ENCODE measurements at regions of chr11 and their contacts with region 1.

Region 1: DNA sequence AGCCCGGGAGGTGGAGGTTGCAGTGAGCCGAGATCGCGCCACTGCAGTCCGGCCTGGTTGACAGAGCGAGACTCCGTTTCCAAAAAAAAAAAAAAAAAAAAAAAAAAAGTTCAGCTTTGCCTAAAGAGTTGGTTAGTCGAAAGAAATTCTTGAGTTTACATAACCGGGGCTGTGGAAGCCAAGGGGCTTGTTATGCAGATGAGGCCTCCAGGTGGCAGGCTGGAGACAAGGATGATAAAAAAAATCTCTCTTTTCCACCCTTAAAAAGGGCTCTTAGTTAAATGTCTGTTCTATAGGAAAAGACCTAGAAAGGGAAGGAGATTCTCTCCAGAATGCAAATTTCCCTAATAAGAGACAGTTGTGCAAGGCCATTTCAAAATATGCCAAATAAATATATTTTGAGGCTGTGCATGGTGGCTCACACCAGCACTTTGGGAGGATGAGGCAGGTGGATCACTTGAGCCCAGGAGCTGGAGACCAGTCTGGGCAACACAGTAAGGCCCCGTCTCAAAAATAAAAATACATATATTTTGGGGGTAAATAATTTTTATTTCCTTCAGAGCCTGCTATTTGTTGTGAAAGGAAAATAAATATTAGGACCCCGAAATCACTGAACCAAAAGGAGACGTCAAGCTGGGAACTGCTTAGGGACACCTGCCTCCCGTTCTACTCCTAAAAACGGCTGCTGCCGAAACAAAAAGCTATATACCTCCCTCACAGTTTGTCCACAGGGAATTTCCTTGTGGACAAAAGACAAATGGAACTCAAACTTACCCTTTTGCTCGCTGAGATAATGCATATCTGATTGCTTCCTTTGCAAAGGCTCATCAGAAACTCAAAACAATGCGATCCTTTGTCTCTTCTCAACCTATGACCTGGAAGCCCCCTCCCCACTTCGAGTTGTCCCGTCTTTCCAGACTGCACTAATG is 2.4 kb upstream of the IFITM2 start:
- DNase-seq: peak; percentile 90
- H3K4me3 ChIP-seq: no peak overlapping the region
- H3K27ac ChIP-seq: peak overlapping the region in 3 of 4 donors; percentile 14 to 86 (median 19)
- H3K4me1 ChIP-seq: peaks cover 0 to 44% (median 15%) of the 10 kb centered on the region in 4 donors
- H3K27me3 ChIP-seq: peaks cover under 1 to 12% (median 3%) of the 10 kb centered on the region in 3 donors
- CTCF ChIP-seq: peak; percentile 64 to 80 (median 74)
- EP300 ChIP-seq: no peak
- POLR2A ChIP-seq: no peak

Region 2: GRCh38 chr11:207208-207862 is 97.8 kb before region 1 on chr11 and contains the starts of genes BET1L and RIC8A:
- intact Hi-C with region 1: loop called (anchors 5 kb)
- DNase-seq: peak; percentile 99
- H3K4me3 ChIP-seq: peak within 1 kb of the TSS; percentile 85 to 98 (median 90)
- H3K27ac ChIP-seq: peak within 1 kb of the TSS; percentile 96 to 100 (median 98)
- H3K4me1 ChIP-seq: peaks cover 0 to 64% (median 47%) of the 10 kb centered on the region in 4 donors
- H3K27me3 ChIP-seq: no peaks in the 10 kb centered on the region
- CTCF ChIP-seq: no peak
- EP300 ChIP-seq: peak in 1 of 4 donors; percentile 65
- POLR2A ChIP-seq: peak; percentile 92 to 97
- total RNA-seq, gene BET1L: 22.8 to 29.6 (median 23.8) TPM
- total RNA-seq, gene RIC8A: 73.7 to 103 (median 86.8) TPM

Region 3: DNA sequence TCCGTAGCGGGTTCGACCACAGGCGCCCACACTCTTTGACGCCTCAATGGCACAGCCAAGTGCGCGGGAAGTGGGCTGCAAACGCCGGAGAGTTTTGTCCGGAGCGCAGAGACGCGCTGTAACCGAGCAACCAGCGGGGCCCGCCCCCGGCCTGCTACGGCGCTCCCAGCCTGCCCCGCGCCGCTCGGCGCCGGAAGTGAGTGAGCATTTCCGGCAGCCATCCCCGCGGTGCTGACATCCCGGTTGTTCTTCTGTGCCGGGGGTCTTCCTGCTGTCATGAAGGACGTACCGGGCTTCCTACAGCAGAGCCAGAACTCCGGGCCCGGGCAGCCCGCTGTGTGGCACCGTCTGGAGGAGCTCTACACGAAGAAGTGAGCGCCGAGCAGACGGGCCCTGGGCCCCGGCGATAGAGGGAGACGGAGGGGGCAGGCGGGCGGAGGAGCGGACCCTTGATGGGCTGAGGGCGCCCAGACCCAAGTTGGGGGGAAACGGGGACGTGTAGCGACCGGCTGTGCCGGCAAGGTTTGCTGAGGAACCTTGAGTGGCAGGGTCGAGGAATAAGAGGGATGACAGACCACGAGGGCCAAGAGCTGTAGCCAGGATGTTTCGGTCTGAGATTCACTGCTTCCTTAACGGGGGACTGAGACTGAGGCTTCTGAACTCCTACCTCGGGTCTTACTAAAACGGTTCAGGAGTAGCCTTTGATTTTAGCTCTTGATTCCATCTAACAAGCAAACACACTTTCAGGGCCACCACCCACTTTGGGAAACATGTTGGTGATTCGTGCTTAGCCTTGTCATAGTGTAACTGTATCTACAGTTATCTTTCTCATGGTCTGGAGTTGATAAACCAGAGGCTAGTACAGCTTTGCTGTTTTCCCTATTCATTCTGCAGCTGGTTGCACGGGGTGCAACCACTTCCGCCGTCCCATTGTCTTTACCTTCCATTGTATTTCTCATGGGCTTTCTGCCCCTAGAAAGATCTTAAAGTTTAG is 68.1 kb before region 1 on chr11 and contains the start of gene PSMD13:
- intact Hi-C with region 1: loop called (anchors 5 kb)
- DNase-seq: peak; percentile 90
- H3K4me3 ChIP-seq: peak within 1 kb of the TSS; percentile 83 to 96 (median 87)
- H3K27ac ChIP-seq: peak within 1 kb of the TSS; percentile 94 to 99 (median 95)
- H3K4me1 ChIP-seq: peaks cover 0 to 30% (median 25%) of the 10 kb centered on the region in 4 donors
- H3K27me3 ChIP-seq: no peaks in the 10 kb centered on the region
- CTCF ChIP-seq: peak in 1 of 4 experiments; percentile 8
- EP300 ChIP-seq: no peak
- POLR2A ChIP-seq: peak; percentile 6 to 32
- total RNA-seq, gene PSMD13: 86.2 to 118 (median 99.3) TPM

Region 4: GRCh38 chr11:250740-251299 is 54.4 kb before region 1 on chr11:
- intact Hi-C with region 1: loop called (anchors 5 kb)
- DNase-seq: peak; percentile 72
- H3K4me3 ChIP-seq: no peak overlapping the region
- H3K27ac ChIP-seq: no peak overlapping the region
- H3K4me1 ChIP-seq: no peaks in the 10 kb centered on the region
- H3K27me3 ChIP-seq: no peaks in the 10 kb centered on the region
- CTCF ChIP-seq: peak; percentile 29 to 58 (median 46)
- EP300 ChIP-seq: no peak
- POLR2A ChIP-seq: no peak

Region 5: GRCh38 chr11:342328-342727 is 37.1 kb after region 1 on chr11:
- intact Hi-C with region 1: no loop called
- DNase-seq: peak; percentile 10
- H3K4me3 ChIP-seq: no peak overlapping the region
- H3K27ac ChIP-seq: peak overlapping the region in 1 of 4 donors; percentile 29
- H3K4me1 ChIP-seq: no peaks in the 10 kb centered on the region
- H3K27me3 ChIP-seq: no peaks in the 10 kb centered on the region
- CTCF ChIP-seq: no peak
- EP300 ChIP-seq: no peak
- POLR2A ChIP-seq: no peak

Region 6: GRCh38 chr11:355581-356458 is 50.6 kb after region 1 on chr11:
- intact Hi-C with region 1: loop called (anchors 2 kb)
- DNase-seq: peak; percentile 99
- H3K4me3 ChIP-seq: peak overlapping the region; percentile 33 to 48 (median 46)
- H3K27ac ChIP-seq: peak overlapping the region; percentile 98 to 100 (median 100)
- H3K4me1 ChIP-seq: peaks cover 0 to 45% (median 37%) of the 10 kb centered on the region in 4 donors
- H3K27me3 ChIP-seq: peaks cover 0 to 16% (median 4%) of the 10 kb centered on the region in 3 donors
- CTCF ChIP-seq: no peak
- EP300 ChIP-seq: peak in 3 of 4 donors; percentile 70 to 75 (median 75)
- POLR2A ChIP-seq: peak; percentile 19 to 44

Region 7: DNA sequence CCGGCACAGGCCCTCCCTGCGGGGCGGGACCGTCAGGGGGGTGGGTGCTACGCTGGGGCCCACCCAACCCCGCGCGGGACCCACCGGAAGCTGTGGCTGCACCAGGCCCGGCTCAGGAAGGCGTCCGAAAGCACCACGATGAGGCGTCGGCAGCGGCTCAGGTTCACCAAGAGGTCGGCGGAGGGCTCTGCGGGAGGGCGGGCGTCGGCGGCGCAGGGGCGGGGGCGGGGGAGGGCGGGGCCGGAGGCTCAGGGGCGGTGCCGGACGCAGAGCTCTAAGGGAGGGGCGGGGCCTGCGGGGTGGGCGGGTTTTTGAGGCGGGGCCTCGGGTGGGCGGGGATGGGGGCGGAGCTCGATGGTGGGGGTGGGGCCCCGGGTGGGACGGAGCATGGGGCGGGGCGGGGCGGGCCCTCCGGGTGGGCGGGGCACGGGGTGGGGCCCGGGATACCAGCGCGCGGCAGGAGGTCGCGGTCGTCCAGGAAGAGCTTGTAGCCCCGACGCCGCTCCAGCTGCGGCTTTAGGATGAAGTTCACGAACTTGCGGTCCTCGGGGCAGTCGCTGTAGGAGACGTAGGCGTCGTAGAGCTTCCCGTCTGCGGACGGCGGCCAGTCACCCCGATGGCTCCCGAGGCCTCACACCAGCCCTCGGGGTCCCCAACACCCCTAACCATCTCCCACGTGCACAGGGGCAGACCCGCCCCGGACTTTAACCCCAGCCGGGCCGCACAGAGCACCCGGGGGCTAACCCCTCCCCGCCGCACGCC is 102.0 kb after region 1 on chr11:
- intact Hi-C with region 1: loop called (anchors 2 kb)
- DNase-seq: peak; percentile 91
- H3K4me3 ChIP-seq: peak overlapping the region; percentile 56 to 79 (median 62)
- H3K27ac ChIP-seq: peak overlapping the region; percentile 70 to 77 (median 74)
- H3K4me1 ChIP-seq: peaks cover 0 to 20% (median 19%) of the 10 kb centered on the region in 4 donors
- H3K27me3 ChIP-seq: peaks cover 0 to 8% (median 7%) of the 10 kb centered on the region in 3 donors
- CTCF ChIP-seq: no peak
- EP300 ChIP-seq: no peak
- POLR2A ChIP-seq: no peak

Region 8: DNA sequence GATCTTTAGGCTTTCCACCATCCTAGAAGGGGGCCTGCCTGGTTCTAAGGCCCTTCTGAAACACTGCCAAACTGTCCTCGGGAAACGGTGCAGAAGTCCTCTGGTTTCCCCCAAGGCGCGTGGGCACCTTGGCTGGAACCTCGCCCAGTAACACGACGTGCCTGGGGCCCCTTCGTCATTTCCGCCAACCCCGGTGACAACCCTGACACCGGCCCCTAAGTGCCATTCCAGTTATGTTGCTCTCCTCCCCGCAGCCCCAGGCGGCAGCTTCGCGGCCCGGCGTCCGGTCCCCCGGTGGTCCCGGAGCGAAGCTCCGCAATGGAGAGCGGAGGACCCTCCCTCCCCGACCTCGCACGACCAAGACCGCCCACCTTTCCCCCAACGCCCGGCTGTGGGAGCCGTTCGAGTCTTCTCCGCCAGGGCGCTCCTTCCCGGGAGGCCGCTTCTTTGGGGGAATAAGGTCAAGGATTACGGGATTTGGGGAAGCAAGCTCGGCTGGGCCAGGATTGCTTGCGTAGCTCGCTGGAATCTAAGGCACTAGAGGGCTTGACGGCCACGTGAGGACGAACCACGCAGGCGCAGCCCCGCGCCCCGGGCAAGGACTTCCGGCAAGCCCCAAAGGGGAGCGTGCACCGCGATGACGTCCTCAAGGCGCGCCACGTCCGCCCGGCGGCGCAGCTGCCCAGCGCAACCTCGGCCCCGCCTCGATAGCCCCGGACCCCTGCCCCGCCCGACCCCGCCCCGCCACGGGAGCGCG is 201.2 kb after region 1 on chr11:
- intact Hi-C with region 1: loop called (anchors 10 kb)
- DNase-seq: peak; percentile 99
- H3K4me3 ChIP-seq: peak overlapping the region; percentile 70 to 94 (median 92)
- H3K27ac ChIP-seq: peak overlapping the region; percentile 97 to 100 (median 99)
- H3K4me1 ChIP-seq: peaks cover 0 to 54% (median 48%) of the 10 kb centered on the region in 4 donors
- H3K27me3 ChIP-seq: no peaks in the 10 kb centered on the region
- CTCF ChIP-seq: no peak
- EP300 ChIP-seq: peak in 2 of 4 donors; percentile 77 to 82
- POLR2A ChIP-seq: peak in 1 of 2 donors; percentile 59

Measured in sigmoid colon (tissue), 7 donors.